Cardiac septum (tissue), 1 donor: ENCODE measurements at regions of chr6 and their contacts with region 1.

Region 1: DNA sequence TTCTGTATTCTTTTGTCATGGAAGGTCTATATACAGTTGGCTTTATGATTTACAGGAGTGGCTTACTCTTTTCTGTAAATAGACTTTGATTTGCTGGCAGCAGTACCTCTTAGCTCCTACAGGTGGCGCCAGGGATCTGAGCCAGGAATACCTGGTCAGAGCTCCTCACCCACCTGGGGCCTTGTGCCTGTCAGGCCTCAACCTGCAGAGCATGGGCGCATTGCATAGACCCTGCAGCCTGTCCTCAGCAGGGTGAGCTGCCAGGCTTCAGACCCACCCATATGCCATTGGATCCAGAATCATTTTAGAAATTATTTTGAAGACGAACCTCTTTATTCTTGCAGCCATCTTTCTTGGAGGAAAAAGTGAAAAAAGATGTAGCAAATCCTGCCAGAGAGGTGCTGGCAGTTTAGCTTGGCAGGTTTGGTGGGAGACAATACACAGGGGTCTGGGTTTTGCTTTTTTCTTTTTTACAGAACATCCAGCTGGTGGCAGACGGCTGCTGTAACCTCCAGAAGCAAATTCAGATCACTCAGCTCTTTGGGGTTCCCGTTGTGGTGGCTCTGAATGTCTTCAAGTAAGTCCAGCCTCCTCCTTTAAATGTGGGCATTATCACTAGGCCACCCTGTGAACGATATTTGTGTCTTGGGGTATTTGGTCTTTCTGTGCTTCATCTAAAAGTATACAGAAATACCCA is 149.1 kb downstream of the MTHFD1L start:
- DNase-seq: peak; percentile 82

Region 2: GRCh38 chr6:150466196-150466595 is 548.4 kb before region 1 on chr6:
- intact Hi-C with region 1: no loop called
- DNase-seq: no peak

Region 3: GRCh38 chr6:150891888-150892485 is 122.6 kb before region 1 on chr6:
- intact Hi-C with region 1: loop called (anchors 5 kb)
- DNase-seq: peak; percentile 83

Region 4: DNA sequence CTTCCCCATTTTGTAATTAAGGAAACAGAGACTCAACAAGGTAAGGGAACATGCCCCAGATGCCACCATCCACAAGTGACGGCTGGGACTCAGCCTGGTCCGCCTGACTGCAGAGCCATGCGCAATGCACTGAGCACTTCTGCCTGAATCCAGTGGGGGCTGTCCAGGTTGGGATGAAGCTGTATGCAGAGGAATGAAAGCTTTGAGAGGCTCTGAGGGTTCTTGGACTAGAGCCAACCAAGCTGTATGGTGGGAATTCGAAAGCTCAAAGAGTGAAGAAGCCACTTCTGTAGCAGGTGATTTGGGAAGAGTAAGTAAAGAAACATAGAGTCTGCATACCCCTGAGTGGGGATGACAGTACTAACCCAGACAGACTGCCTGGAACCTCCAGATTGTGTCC is 97.6 kb after region 1 on chr6:
- intact Hi-C with region 1: no loop called
- DNase-seq: no peak

Region 5: DNA sequence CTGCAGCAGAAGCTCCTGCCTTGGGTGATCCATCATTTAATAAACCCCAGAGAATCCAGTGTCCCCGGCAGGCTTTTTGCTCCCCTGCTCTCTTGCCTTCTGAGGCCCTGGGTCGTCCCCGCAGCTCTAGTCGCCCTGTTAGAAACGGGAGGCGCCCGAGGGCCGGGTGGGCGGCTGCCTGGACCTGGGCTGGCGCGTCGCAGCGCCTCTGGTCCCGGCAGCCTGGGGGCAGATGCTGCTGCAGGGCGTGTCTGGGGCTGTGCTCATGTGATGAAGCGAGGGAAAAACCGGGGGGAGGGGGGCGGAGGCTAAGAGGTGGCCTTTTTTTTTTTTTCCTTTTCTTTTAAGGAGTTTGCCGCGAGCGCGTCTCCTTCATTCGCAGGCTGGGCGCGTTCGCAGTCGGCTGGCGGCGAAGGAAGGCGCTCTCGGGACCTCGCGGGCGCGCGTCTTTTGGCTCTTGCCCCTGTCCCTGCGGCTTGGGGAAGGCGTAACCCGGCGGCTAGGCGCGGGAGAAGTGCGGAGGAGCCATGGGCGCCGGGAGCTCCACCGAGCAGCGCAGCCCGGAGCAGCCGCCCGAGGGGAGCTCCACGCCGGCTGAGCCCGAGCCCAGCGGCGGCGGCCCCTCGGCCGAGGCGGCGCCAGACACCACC is 225.6 kb after region 1 on chr6:
- intact Hi-C with region 1: loop called (anchors 5 kb)
- DNase-seq: peak; percentile 82